ENCODE measurements at regions of chr3 and their contacts with region 1.

Region 1: DNA sequence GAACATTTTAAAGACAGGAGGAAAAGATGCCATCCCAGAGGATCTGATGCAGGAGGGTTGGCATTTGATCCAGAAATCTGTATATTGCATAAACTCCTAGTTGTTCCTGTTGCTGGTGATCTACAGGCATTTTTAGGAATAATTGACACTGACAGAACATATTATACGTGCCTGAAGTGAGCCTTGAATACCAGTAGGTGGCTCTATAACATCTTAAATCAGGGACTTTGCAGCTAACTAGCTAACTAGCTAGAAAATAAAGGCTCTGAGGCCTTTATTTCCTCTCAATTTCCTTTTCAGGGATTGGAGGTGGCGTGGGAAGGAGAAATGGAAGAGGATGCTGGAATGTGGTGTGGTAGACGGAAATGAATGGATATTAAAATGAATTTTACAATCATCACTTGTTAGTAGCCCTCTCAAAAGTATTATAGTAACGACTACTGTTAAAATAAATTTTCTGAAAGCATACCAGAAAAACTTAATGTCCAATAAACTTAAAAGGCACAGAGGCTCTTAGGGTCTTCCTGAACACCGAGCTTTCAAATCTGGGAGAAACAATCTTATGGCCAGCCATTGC is 73.9 kb upstream of the ZBED2 start:
- DNase-seq: no peak
- ATAC-seq: peak; percentile 50
- H3K4me3 Mint-ChIP-seq: no peak overlapping the region
- H3K27ac Mint-ChIP-seq: peak overlapping the region; percentile 68
- H3K4me1 Mint-ChIP-seq: peaks cover 84% of the 10 kb centered on the region
- H3K27me3 Mint-ChIP-seq: no peaks in the 10 kb centered on the region
- CTCF ChIP-seq: peak; percentile 84

Region 2: DNA sequence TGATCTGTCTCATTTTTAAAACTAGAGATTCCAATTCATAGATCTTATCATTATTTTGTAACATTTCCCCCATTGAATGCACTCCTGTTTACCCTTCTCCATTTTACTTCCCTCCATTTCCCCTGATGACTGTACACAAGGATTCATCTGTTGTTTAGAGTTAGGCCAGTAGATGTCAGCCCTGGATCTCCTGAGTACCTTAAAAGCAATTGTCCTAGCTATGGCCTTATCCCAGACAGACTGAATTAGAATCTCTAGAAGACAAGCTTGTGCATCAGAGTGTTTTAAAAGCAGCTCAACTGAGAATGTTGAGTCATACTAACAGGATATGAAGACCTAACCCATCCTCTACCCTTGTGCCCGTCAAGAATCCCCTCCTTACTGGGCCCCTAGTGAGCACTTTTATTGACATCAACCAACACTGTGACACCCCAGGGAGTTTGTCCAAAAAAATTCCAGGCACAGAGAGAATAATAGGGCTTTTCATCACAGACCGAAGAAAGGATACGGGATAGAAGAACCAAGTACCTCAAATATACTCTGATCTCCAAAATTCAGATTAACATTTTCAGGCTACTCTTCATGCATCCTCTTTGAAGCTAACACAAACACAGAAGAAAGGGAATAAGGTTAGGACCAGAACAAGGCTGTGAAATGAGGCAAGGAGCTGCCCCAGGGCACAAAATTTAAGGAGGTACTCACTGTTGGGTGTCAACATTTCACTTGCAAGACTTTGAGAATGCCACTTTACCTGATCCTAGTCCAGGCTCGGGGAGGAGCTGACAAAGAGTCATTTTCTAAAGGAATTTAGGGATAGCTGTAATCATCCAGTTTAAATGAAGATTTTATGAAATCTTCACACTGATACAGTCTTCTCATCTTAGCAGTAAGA is 91.0 kb before region 1 on chr3:
- CTCF ChIA-PET with region 1: interaction called, 36 read pairs
- POLR2A ChIA-PET with region 1: interaction called, 3 read pairs
- intact Hi-C with region 1: loop called (anchors 2 kb)
- DNase-seq: no peak
- ATAC-seq: peak; percentile 88
- H3K4me3 Mint-ChIP-seq: no peak overlapping the region
- H3K27ac Mint-ChIP-seq: peak overlapping the region; percentile 73
- H3K4me1 Mint-ChIP-seq: peaks cover 80% of the 10 kb centered on the region
- H3K27me3 Mint-ChIP-seq: no peaks in the 10 kb centered on the region
- CTCF ChIP-seq: peak; percentile 64

Region 3: DNA sequence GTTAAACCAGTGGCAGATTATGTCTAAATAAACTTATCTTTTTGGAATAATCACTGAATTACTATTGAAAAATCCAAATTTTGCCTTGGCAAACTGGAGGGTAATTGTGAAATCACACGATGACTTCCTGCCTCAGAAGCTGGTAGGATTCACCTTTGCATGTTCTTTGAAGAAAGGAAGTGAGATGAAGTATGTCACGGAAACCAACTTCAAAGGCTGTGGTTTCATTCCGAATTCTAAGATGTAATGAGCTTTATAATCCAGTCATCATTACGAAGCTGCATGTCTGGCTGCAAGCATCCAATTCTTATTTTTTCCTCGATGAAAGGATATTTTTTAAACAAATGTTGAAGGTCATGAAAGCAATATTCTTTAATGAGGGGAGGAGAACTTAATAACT is 58.8 kb before region 1 on chr3:
- CTCF ChIA-PET with region 1: interaction called, 4 read pairs
- POLR2A ChIA-PET with region 1: interaction called, 6 read pairs
- intact Hi-C with region 1: loop called (anchors 5 kb)
- DNase-seq: peak; percentile 68
- ATAC-seq: peak; percentile 53
- H3K4me3 Mint-ChIP-seq: peak overlapping the region; percentile 63
- H3K27ac Mint-ChIP-seq: peak overlapping the region; percentile 93
- H3K4me1 Mint-ChIP-seq: peaks cover 96% of the 10 kb centered on the region
- H3K27me3 Mint-ChIP-seq: no peaks in the 10 kb centered on the region
- CTCF ChIP-seq: no peak

Region 4: GRCh38 chr3:111700054-111700453 is 31.1 kb after region 1 on chr3:
- CTCF ChIA-PET with region 1: no interaction called
- POLR2A ChIA-PET with region 1: interaction called, 4 read pairs
- intact Hi-C with region 1: loop called (anchors 5 kb)
- DNase-seq: peak; percentile 23
- ATAC-seq: peak; percentile 18
- H3K4me3 Mint-ChIP-seq: peak overlapping the region; percentile 34
- H3K27ac Mint-ChIP-seq: peak overlapping the region; percentile 75
- H3K4me1 Mint-ChIP-seq: peaks cover 32% of the 10 kb centered on the region
- H3K27me3 Mint-ChIP-seq: no peaks in the 10 kb centered on the region
- CTCF ChIP-seq: no peak

Region 5: DNA sequence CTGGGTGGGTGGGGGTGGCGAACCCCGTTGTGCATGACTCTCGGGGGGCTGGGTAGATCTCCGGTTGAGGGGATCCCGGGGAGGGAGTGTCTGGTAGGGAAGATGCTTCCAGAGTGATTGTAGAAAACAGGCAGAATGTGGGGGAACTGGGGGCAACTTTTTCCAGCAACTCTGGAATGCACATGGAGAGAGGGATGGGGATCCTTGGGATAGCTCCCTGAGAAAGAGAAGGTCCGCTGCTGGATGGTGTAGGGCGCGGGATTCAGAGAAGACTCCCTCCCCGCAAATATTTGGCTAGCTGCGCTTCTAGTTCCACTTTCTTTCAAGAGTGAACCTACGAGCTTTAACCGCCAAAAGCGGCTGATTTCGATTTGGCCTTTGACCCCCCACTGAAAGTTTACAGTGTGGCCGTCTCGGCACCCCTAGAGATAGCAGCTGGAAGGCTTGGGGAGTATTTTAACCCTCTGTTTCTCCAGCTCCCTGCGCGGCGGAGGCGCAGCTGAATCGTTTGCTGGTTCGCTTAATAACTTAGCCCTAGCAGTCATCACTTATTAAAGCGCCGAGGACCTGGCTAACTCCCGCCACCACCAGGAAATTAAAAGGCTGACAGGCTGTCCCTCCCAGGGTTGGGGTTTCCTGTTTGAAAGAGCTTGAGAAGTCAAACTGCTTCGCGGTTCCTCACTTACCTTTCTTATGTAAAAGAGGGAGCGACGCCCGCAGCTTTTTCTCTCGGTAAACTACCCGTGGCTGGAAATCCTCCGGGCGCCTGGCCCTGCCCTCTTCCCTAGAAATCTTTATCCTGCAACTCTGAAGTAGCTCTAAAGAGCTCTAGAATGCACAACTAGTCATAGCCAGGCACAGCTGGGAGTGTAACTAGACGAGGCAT is 191.2 kb after region 1 on chr3:
- CTCF ChIA-PET with region 1: interaction called, 12 read pairs
- POLR2A ChIA-PET with region 1: no interaction called
- intact Hi-C with region 1: loop called (anchors 5 kb)
- DNase-seq: peak; percentile 75
- ATAC-seq: peak; percentile 72
- H3K4me3 Mint-ChIP-seq: peak overlapping the region; percentile 92
- H3K27ac Mint-ChIP-seq: peak overlapping the region; percentile 57
- H3K4me1 Mint-ChIP-seq: peaks cover 7% of the 10 kb centered on the region
- H3K27me3 Mint-ChIP-seq: peaks cover 22% of the 10 kb centered on the region
- CTCF ChIP-seq: peak; percentile 47